Activated T-helper 2 cell treated with anti-CD3 and anti-CD28 coated beads, Interferon-gamma antibody, Interleukin-2, Interleukin-4, amounts not matched to agents 10 μg/mL and 5 μg/mL and 100 μg/mL, durations not matched to agents 14 hours and 24 hours and 36 hours (primary cell): ENCODE measurements at regions of chr3 and their contacts with region 1.

Region 1: GRCh38 chr3:189288348-189289235 is 116.8 kb downstream of the TPRG1 start:
- DNase-seq: no peak
- H3K4me3 Mint-ChIP-seq: peak overlapping the region; percentile 45
- H3K27ac Mint-ChIP-seq: peak overlapping the region; percentile 88
- H3K4me1 Mint-ChIP-seq: peaks cover 43% of the 10 kb centered on the region
- H3K27me3 Mint-ChIP-seq: no peaks in the 10 kb centered on the region

Region 2: GRCh38 chr3:189233225-189233858 is 55.2 kb before region 1 on chr3:
- intact Hi-C with region 1: loop called (anchors 2 kb)
- DNase-seq: no peak
- H3K4me3 Mint-ChIP-seq: no peak overlapping the region
- H3K27ac Mint-ChIP-seq: no peak overlapping the region
- H3K4me1 Mint-ChIP-seq: peaks cover 48% of the 10 kb centered on the region
- H3K27me3 Mint-ChIP-seq: peaks cover 18% of the 10 kb centered on the region

Region 3: GRCh38 chr3:189276481-189277219 is 11.9 kb before region 1 on chr3:
- intact Hi-C with region 1: loop called (anchors 1 kb)
- DNase-seq: no peak
- H3K4me3 Mint-ChIP-seq: no peak overlapping the region
- H3K27ac Mint-ChIP-seq: peak overlapping the region; percentile 44
- H3K4me1 Mint-ChIP-seq: peaks cover 52% of the 10 kb centered on the region
- H3K27me3 Mint-ChIP-seq: no peaks in the 10 kb centered on the region

Region 4: GRCh38 chr3:189298469-189299375 is 10.1 kb after region 1 on chr3:
- intact Hi-C with region 1: loop called (anchors 1 kb)
- DNase-seq: no peak
- H3K4me3 Mint-ChIP-seq: peak overlapping the region; percentile 35
- H3K27ac Mint-ChIP-seq: peak overlapping the region; percentile 91
- H3K4me1 Mint-ChIP-seq: peaks cover 76% of the 10 kb centered on the region
- H3K27me3 Mint-ChIP-seq: no peaks in the 10 kb centered on the region

Region 5: GRCh38 chr3:189419038-189419437 is 130.4 kb after region 1 on chr3:
- intact Hi-C with region 1: loop called (anchors 5 kb)
- DNase-seq: no peak
- H3K4me3 Mint-ChIP-seq: no peak overlapping the region
- H3K27ac Mint-ChIP-seq: no peak overlapping the region
- H3K4me1 Mint-ChIP-seq: peaks cover 37% of the 10 kb centered on the region
- H3K27me3 Mint-ChIP-seq: no peaks in the 10 kb centered on the region

Region 6: GRCh38 chr3:189570916-189571315 is 282.3 kb after region 1 on chr3:
- intact Hi-C with region 1: loop called (anchors 5 kb)
- DNase-seq: no peak
- H3K4me3 Mint-ChIP-seq: peak overlapping the region; percentile 9
- H3K27ac Mint-ChIP-seq: peak overlapping the region; percentile 20
- H3K4me1 Mint-ChIP-seq: peaks cover 70% of the 10 kb centered on the region
- H3K27me3 Mint-ChIP-seq: no peaks in the 10 kb centered on the region